ENCODE measurements at regions of chr1 and their contacts with region 1.

Region 1: DNA sequence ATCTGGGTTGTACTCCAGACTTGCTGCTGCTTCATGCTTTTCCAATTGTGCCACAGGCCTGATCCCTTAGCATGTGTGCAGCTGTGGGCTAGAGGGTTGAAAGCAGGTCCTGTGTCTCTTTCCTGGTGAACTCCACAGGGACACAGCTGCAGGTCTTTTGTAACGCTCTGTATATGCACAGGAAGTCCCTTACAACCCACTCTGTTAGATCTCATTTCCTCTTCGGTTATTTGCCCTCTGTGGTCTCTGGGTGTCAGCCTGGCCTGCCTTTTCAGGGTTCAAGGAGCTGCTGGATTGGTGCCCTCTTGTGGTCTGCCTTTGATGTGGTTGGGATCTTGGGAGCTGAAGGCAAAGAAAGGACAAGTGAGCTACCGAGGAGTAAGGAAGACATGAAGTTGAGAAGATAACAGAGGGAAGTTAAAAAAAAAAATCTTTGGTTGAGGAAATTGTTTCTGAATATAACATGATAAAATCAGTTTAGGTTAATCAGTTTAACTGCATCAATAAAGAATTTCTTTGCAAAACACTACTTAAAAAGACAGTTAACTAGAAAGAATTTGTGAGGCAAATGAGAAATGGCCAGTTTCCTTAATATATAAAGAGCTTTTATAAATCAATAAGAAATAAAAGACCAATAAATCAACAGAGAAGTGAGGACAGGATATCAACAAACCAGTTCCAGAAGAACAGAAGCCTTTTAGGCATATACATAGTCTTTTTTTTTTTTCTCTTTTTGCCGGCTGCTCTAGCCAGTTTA is 44.1 kb downstream of the UCK2 start:
- DNase-seq: peak; percentile 71
- ATAC-seq: peak; percentile 86
- H3K4me3 Mint-ChIP-seq: no peak overlapping the region
- H3K27ac Mint-ChIP-seq: peak overlapping the region; percentile 61
- H3K4me1 Mint-ChIP-seq: peaks cover 49% of the 10 kb centered on the region
- H3K27me3 Mint-ChIP-seq: no peaks in the 10 kb centered on the region

Region 2: DNA sequence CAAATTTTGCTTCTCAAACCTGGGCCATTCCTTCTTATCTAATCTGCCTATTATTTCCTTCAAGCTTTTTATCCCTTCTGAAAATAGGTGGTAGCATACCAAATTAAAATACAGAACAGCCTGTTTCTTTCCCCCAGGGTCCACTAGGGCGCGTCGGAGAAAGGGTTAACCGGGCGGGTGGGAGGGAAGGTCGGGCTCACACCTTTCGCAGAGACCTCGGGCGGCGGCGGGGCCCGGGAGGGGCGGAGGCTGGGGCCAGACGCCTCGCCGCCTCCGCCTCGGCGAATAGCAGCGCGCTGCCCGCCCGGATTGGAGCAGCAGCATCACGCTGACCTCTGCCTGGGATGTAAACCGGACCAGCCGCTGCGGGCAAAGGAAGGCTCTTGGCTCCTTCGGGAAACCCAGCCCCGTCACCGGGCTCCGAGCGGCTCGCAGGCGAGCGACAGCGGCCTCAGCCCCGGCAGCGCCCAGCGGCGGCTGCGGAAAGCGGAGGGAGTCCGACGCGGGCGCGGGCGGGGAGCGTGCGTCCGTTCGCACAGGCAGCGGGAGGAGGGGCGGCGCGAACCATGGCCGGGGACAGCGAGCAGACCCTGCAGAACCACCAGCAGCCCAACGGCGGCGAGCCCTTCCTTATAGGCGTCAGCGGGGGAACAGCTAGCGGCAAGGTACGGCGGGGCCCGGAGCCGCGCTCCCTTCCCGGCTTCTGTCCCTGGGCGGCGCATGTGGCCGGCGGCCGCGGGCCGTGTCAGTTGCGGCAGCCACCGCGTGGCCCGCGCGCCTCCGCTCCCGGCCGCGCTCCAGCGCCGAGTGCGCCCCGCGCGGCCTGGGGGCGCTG is 44.0 kb before region 1 on chr1 and contains the start of gene UCK2:
- CTCF ChIA-PET with region 1: no interaction called
- POLR2A ChIA-PET with region 1: interaction called, 5 read pairs
- intact Hi-C with region 1: loop called (anchors 1 to 5 kb)
- DNase-seq: peak; percentile 83
- ATAC-seq: peak; percentile 76
- H3K4me3 Mint-ChIP-seq: peak within 1 kb of the TSS; percentile 96
- H3K27ac Mint-ChIP-seq: peak within 1 kb of the TSS; percentile 92
- H3K4me1 Mint-ChIP-seq: peaks cover 13% of the 10 kb centered on the region
- H3K27me3 Mint-ChIP-seq: no peaks in the 10 kb centered on the region
- total RNA-seq, gene UCK2: 69.4 to 81.5 TPM